B cell (primary cell): ENCODE measurements at regions of chr4 and their contacts with region 1.

Region 1: DNA sequence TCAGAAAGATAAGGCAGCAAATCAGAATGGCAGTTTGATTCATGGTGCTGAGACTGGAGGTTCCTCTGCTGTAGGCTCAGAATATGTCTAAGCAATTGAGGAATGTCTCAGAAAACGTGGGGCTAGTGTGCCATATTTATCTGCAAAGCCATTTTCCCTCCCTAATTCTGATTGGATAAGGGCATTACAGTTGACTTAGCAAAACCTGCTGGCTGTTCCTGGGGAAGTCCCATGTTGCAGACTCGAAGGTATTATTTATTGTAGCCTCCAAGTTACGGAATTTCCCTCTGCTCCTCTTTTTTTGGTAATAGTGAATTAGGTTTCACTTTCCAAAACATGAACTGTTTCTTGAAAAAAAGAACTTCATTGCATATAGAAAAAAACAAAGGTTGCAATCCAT is at the start of gene CXCL10:
- DNase-seq: peak; percentile 55
- ATAC-seq: peak; percentile 36
- H3K4me3 ChIP-seq: no peak within 1 kb of the TSS
- H3K4me3 Mint-ChIP-seq: peak within 1 kb of the TSS; percentile 52
- H3K27ac ChIP-seq: no peak within 1 kb of the TSS
- H3K27ac Mint-ChIP-seq: no peak within 1 kb of the TSS
- H3K4me1 ChIP-seq: peaks cover 14 to 24% of the 10 kb centered on the region in 2 donors
- H3K4me1 Mint-ChIP-seq: peaks cover 33% of the 10 kb centered on the region
- H3K27me3 ChIP-seq: no peaks in the 10 kb centered on the region
- H3K27me3 Mint-ChIP-seq: no peaks in the 10 kb centered on the region
- CTCF ChIP-seq: no peak
- total RNA-seq, gene CXCL10: not detected in 2 replicates

Region 2: DNA sequence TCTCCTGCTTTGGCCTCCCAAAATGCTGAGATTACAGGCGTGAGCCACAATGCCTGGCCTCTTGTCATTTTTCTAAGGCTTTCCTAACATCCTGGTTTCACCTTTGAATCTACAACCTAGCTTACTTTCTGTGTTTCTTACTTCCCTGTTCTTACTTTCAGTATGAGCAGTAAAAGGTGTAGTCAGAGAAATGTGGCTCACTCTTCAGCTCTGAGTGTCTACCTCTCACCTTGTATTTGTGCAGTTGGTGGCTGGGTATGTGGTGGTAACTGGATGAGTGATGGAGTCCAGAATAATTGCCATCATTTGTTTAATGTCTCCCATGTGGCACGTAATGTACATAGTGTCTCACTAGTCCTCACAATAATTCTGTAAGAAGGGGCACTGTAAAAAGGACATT is 31.6 kb after region 1 on chr4:
- CTCF ChIA-PET with region 1: no interaction called
- POLR2A ChIA-PET with region 1: no interaction called
- intact Hi-C with region 1: loop called (anchors 5 kb)
- DNase-seq: peak; percentile 63
- ATAC-seq: peak; percentile 95
- H3K4me3 ChIP-seq: no peak overlapping the region
- H3K4me3 Mint-ChIP-seq: peak overlapping the region; percentile 55
- H3K27ac ChIP-seq: peak overlapping the region; percentile 39 to 69
- H3K27ac Mint-ChIP-seq: peak overlapping the region; percentile 86
- H3K4me1 ChIP-seq: peaks cover 17 to 20% of the 10 kb centered on the region in 2 donors
- H3K4me1 Mint-ChIP-seq: peaks cover 19% of the 10 kb centered on the region
- H3K27me3 ChIP-seq: no peaks in the 10 kb centered on the region
- H3K27me3 Mint-ChIP-seq: no peaks in the 10 kb centered on the region
- CTCF ChIP-seq: no peak

Region 3: DNA sequence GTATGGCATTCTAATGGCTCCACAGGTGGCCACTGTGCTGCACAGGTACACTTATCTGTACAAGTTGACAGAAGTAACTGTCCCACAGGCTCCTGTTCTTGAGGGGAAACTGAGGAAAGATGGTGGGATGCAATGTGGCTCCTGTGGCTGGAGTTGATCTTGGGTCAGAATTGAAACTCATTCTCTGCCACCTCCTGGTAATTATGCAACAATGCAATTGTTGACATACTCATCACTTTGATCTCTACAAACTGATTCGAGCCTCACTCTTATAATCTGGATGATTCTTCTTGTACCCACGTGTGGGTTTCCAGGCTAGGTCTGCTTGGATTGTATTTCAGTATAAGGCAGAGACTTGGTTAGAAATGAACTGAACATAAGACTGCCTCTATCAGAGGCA is 1282.4 kb after region 1 on chr4:
- CTCF ChIA-PET with region 1: no interaction called
- POLR2A ChIA-PET with region 1: no interaction called
- intact Hi-C with region 1: no loop called
- DNase-seq: no peak
- ATAC-seq: no peak
- H3K4me3 ChIP-seq: no peak overlapping the region
- H3K4me3 Mint-ChIP-seq: no peak overlapping the region
- H3K27ac ChIP-seq: no peak overlapping the region
- H3K27ac Mint-ChIP-seq: no peak overlapping the region
- H3K4me1 ChIP-seq: no peaks in the 10 kb centered on the region
- H3K4me1 Mint-ChIP-seq: no peaks in the 10 kb centered on the region
- H3K27me3 ChIP-seq: peaks cover 0 to 2% (median 0%) of the 10 kb centered on the region in 4 experiments
- H3K27me3 Mint-ChIP-seq: peaks cover 3% of the 10 kb centered on the region
- CTCF ChIP-seq: no peak